AG04449 (cell line): ENCODE measurements at regions of chr21 and their contacts with region 1.

Region 1: DNA sequence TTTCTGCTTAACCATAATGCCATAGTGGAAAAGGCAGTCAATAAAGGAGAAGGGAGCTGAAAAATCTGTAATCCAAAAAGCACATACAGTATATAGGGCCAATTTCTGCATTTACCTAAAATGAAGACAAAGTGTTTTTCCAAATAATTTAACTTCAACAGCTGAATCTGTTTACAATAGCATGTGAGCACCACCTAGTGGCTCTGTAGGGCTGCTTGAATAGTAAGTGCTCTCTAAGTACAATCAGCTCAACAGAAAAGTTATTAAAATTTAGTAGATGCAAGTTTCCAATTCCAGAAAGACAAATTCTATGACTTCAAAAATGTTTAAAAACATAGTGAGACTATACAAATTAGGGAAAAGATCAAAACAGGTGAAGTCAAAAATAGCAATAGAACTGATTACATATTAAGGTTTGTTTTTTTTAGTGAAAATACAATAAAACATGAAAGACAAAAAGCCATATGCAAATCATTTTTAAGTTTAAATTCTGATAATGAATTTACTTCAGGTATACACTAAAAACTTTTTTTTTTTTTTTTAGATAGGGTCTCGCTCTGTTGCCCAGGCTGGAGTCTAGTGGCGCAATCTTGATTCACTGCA is 220.0 kb downstream of the SETD4 start:
- DNase-seq: peak; percentile 65
- H3K4me3 ChIP-seq: no peak overlapping the region
- CTCF ChIP-seq: peak; percentile 71

Region 2: DNA sequence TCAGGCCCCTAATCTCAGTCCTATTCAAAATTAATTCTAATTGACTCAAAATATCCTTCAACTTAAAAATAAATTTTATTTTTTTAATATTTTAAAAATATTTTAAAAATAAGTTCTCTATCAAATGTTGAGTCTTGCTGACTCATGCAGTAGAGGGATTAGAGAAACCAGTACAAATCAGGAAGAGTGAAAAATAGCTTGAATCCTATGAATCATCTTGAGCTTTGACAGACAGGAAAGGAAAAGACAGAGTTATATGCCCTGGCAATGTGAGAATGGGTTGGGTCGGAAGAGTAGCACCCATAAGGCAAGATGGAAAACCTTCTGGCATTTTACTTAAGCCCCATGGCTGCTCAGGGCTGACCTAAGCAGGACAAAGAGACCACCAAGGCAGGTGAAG is 444.6 kb before region 1 on chr21:
- CTCF ChIA-PET with region 1: no interaction called
- POLR2A ChIA-PET with region 1: no interaction called
- DNase-seq: no peak
- H3K4me3 ChIP-seq: no peak overlapping the region
- CTCF ChIP-seq: no peak

Region 3: GRCh38 chr21:35559128-35559828 is 281.0 kb before region 1 on chr21:
- CTCF ChIA-PET with region 1: interaction called, 10 read pairs
- POLR2A ChIA-PET with region 1: no interaction called
- DNase-seq: peak; percentile 93
- H3K4me3 ChIP-seq: no peak overlapping the region
- CTCF ChIP-seq: peak; percentile 14

Region 4: GRCh38 chr21:35616090-35616489 is 224.2 kb before region 1 on chr21:
- CTCF ChIA-PET with region 1: interaction called, 15 read pairs
- POLR2A ChIA-PET with region 1: no interaction called
- DNase-seq: peak; percentile 47
- H3K4me3 ChIP-seq: no peak overlapping the region
- CTCF ChIP-seq: peak; percentile 22

Region 5: DNA sequence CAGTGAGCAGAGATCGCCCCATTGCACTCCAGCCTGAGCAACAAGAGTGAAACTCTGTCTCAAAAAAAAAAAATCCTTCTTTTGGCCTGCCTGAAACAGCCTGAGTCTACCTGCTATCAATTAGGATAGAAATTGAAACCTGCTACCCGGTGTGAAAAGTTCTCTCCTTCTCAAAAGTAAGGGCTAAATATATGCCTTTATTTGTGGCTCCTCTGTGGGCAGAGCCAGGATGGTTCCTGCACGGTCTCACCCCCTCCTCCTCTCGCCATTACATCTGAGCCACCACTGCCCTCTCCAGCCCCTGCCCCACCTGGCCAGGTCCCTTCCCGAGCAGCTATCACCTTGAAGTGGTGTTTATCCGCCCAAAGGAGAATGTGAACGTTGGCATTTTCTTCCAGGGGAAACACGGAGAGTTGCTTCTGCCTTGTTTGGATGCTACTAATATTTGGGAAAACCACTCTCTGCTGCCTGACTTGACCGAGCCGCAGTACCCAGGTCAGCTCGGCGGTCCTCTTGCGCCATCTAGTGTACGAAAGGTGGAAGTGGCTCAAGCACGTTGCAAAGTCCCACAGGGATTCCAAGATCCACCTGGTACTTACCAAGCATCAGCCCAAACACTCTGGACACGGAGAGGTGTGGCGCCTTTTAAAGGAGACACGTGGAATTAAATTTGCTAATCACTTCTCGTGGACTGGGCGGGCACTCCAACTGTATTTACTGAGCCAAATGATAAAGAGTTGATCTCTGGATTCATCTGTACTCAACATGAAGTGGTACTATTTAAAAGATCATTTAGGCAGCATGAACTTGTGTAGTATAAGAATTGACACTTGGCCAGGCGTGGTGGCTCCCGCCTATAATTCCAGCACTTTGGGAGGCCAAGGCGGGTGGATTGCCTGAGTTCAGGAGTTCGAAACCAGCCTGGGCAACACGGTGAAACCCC is 188.1 kb after region 1 on chr21:
- CTCF ChIA-PET with region 1: interaction called, 10 read pairs
- POLR2A ChIA-PET with region 1: no interaction called
- DNase-seq: no peak
- H3K4me3 ChIP-seq: peak overlapping the region; percentile 12; the same call in 1 of the 2 replicates
- CTCF ChIP-seq: peak; percentile 91